SK-N-SH (cell line): ENCODE measurements at regions of chr7 and their contacts with region 1.

Region 1: GRCh38 chr7:28955718-28956619 is 2.2 kb downstream of the TRIL start:
- DNase-seq: peak; percentile 87
- H3K4me3 ChIP-seq: peak overlapping the region; percentile 52 to 59
- H3K27ac ChIP-seq: peak overlapping the region in 1 of 2 experiments; percentile 100; a peak in 2 of 4 replicates
- H3K4me1 ChIP-seq: peaks cover 11 to 66% of the 10 kb centered on the region in 2 experiments
- H3K27me3 ChIP-seq: peaks cover 36% of the 10 kb centered on the region
- CTCF ChIP-seq: peak; percentile 32
- EP300 ChIP-seq: no peak
- RAD21 ChIP-seq: peak; percentile 63

Region 2: DNA sequence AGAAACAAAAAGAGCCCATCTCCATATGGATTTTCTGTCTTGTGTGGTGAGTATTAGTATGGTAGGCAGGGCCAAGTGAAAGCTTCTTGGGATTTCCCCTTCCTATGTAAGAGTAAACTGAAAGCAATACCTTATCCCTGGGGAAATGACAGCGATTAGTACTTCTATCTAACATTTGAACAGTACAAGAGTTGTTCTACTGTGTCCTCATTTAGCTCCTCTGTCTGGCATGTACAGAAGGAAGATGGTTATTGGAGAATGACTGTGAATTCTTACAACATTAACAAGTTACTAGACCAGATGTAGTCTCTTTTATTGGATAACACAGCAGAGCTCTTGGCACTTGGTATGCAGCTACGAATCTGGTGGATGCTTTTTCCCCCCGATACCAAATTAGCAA is 20.1 kb after region 1 on chr7:
- CTCF ChIA-PET with region 1: interaction called, 60 read pairs
- POLR2A ChIA-PET with region 1: interaction called, 62 read pairs
- DNase-seq: no peak
- H3K4me3 ChIP-seq: no peak overlapping the region
- H3K27ac ChIP-seq: no peak overlapping the region
- H3K4me1 ChIP-seq: peaks cover 4 to 9% of the 10 kb centered on the region in 2 experiments; a peak in 3 of 4 replicates
- H3K27me3 ChIP-seq: no peaks in the 10 kb centered on the region
- CTCF ChIP-seq: no peak
- EP300 ChIP-seq: no peak
- RAD21 ChIP-seq: no peak

Region 3: GRCh38 chr7:28990200-28990960 is 34.4 kb after region 1 on chr7:
- CTCF ChIA-PET with region 1: interaction called, 30 read pairs
- POLR2A ChIA-PET with region 1: no interaction called
- DNase-seq: peak; percentile 22
- H3K4me3 ChIP-seq: no peak overlapping the region
- H3K27ac ChIP-seq: peak overlapping the region in 1 of 2 experiments; percentile 51; a peak in 1 of 4 replicates
- H3K4me1 ChIP-seq: peaks cover 6 to 38% of the 10 kb centered on the region in 2 experiments; a peak in 2 of 4 replicates
- H3K27me3 ChIP-seq: no peaks in the 10 kb centered on the region
- CTCF ChIP-seq: no peak
- EP300 ChIP-seq: no peak
- RAD21 ChIP-seq: no peak

Region 4: DNA sequence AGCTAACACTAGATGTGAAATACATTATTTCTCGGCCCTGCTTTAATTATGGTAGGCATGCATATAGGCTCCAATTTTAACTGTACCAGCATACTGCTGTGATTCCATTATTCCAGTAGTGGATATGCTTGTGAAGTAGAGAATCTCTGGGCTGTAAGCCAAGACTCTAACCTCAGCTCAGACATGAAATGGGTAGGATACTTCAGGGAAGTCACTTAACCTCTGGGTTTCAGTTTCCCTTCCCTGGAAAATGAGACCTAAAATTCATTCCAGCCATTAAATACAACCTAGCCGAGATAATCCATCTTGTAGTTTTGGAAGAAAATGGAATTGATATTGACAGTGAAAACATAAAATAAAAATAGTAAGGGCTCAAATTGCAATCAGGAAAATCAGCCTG is 61.7 kb after region 1 on chr7:
- CTCF ChIA-PET with region 1: interaction called, 16 read pairs
- POLR2A ChIA-PET with region 1: interaction called, 3 read pairs
- DNase-seq: no peak
- H3K4me3 ChIP-seq: no peak overlapping the region
- H3K27ac ChIP-seq: no peak overlapping the region
- H3K4me1 ChIP-seq: peaks cover 4 to 10% of the 10 kb centered on the region in 2 experiments; a peak in 2 of 4 replicates
- H3K27me3 ChIP-seq: no peaks in the 10 kb centered on the region
- CTCF ChIP-seq: no peak
- EP300 ChIP-seq: no peak
- RAD21 ChIP-seq: no peak

Region 5: GRCh38 chr7:29119538-29120199 is 163.7 kb after region 1 on chr7:
- CTCF ChIA-PET with region 1: interaction called, 240 read pairs
- POLR2A ChIA-PET with region 1: no interaction called
- DNase-seq: no peak
- H3K4me3 ChIP-seq: no peak overlapping the region
- H3K27ac ChIP-seq: no peak overlapping the region
- H3K4me1 ChIP-seq: no peaks in the 10 kb centered on the region
- H3K27me3 ChIP-seq: 0 out of 2 replicates have a peak, but pooled peaks cover 5% of the 10 kb centered on the region
- CTCF ChIP-seq: no peak
- EP300 ChIP-seq: no peak
- RAD21 ChIP-seq: no peak

Region 6: GRCh38 chr7:29764227-29764626 is 808.3 kb after region 1 on chr7:
- CTCF ChIA-PET with region 1: no interaction called
- POLR2A ChIA-PET with region 1: no interaction called
- DNase-seq: peak; percentile 20
- H3K4me3 ChIP-seq: no peak overlapping the region
- H3K27ac ChIP-seq: no peak overlapping the region
- H3K4me1 ChIP-seq: peaks cover 0 to 4% of the 10 kb centered on the region in 2 experiments; a peak in 1 of 4 replicates
- H3K27me3 ChIP-seq: peaks cover 8% of the 10 kb centered on the region; the same call in 1 of the 2 replicates
- CTCF ChIP-seq: no peak
- EP300 ChIP-seq: no peak
- RAD21 ChIP-seq: peak; percentile 51